ENCODE measurements at regions of chr1 and their contacts with region 1.

Region 1: DNA sequence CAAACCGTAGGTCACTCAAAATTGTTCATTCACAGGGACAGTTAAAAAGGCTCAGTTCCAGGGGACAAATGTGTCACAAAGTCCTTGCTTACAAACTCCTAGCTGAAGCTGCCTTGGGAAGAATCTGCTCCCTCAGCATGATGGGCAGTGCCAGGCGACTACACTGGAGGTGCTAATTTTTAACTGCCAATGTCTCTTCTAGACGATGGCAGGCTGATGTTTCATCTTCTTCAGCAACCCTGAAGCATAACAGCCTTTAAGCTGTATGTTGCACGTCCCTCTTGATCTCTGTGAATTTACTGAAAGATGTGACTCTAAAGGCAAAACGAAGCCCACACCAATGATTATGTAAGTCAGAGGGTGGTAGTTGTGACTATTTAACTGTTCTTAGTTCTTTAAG is 11.3 kb downstream of the COA7 start:
- DNase-seq: no peak
- H3K4me3 Mint-ChIP-seq: no peak overlapping the region
- H3K27ac Mint-ChIP-seq: no peak overlapping the region
- H3K4me1 Mint-ChIP-seq: peaks cover 9% of the 10 kb centered on the region
- H3K27me3 Mint-ChIP-seq: no peaks in the 10 kb centered on the region

Region 2: DNA sequence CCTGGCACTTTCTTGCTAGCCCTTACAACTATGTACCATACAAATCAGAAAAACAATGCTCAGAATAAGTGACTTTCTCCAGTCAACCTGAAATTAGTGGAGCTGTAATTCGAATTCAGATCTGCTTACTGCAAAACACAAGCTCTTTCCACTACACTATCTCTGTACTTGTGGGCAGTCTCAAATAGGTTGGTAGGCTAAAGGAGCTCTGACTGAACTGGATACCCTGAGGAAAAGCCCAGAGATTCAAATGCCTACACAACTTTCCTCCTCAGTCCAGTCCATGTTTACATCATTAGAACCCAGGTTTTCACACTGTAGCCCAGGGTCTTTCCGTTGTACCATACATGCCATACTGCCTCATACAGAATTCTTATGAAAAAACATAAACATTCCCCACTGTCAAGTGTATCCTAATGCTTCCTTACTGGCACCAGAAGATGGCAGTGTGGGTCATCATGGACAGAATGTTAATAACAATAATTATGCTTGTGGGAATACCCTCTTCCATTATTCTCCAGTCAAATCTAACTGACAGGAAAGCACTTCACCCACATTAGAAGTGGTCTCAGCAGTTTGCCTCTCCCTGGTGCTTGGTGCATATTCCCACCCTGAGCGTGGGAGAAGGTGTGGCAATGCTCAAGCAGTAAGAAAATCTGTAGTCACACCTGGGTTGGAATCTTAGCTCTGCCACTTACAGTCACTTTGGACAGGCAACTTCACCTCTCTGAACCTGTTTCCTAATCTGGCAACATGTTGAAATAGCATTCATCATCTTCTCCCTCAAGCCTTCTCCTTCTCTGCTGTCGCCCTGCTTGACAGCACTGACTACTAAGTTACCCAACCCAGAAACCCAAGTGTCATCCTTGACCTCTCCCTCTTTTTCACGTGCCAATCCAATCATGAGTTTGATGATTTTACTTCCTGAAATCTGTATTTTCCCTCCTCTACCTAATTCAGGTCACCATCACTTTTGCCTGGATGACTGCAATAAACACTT is 559.3 kb before region 1 on chr1:
- CTCF ChIA-PET with region 1: no interaction called
- intact Hi-C with region 1: loop called (anchors 1 kb)
- DNase-seq: peak; percentile 59
- H3K4me3 Mint-ChIP-seq: no peak overlapping the region
- H3K27ac Mint-ChIP-seq: no peak overlapping the region
- H3K4me1 Mint-ChIP-seq: peaks cover 16% of the 10 kb centered on the region
- H3K27me3 Mint-ChIP-seq: peaks cover 11% of the 10 kb centered on the region

Region 3: GRCh38 chr1:52281518-52281917 is 405.3 kb before region 1 on chr1:
- CTCF ChIA-PET with region 1: no interaction called
- intact Hi-C with region 1: no loop called
- DNase-seq: no peak
- H3K4me3 Mint-ChIP-seq: no peak overlapping the region
- H3K27ac Mint-ChIP-seq: no peak overlapping the region
- H3K4me1 Mint-ChIP-seq: no peaks in the 10 kb centered on the region
- H3K27me3 Mint-ChIP-seq: no peaks in the 10 kb centered on the region

Region 4: GRCh38 chr1:52404116-52404986 is 282.5 kb before region 1 on chr1 and contains the starts of genes ORC1 and PRPF38A:
- CTCF ChIA-PET with region 1: interaction called, 6 read pairs
- intact Hi-C with region 1: loop called (anchors 1 kb)
- DNase-seq: peak; percentile 99
- H3K4me3 Mint-ChIP-seq: peak within 1 kb of the TSS; percentile 100
- H3K27ac Mint-ChIP-seq: peak within 1 kb of the TSS; percentile 99
- H3K4me1 Mint-ChIP-seq: peaks cover 45% of the 10 kb centered on the region
- H3K27me3 Mint-ChIP-seq: no peaks in the 10 kb centered on the region
- total RNA-seq, gene ORC1: 46.9 to 49.3 TPM
- total RNA-seq, gene PRPF38A: 86.0 to 91.8 TPM

Region 5: DNA sequence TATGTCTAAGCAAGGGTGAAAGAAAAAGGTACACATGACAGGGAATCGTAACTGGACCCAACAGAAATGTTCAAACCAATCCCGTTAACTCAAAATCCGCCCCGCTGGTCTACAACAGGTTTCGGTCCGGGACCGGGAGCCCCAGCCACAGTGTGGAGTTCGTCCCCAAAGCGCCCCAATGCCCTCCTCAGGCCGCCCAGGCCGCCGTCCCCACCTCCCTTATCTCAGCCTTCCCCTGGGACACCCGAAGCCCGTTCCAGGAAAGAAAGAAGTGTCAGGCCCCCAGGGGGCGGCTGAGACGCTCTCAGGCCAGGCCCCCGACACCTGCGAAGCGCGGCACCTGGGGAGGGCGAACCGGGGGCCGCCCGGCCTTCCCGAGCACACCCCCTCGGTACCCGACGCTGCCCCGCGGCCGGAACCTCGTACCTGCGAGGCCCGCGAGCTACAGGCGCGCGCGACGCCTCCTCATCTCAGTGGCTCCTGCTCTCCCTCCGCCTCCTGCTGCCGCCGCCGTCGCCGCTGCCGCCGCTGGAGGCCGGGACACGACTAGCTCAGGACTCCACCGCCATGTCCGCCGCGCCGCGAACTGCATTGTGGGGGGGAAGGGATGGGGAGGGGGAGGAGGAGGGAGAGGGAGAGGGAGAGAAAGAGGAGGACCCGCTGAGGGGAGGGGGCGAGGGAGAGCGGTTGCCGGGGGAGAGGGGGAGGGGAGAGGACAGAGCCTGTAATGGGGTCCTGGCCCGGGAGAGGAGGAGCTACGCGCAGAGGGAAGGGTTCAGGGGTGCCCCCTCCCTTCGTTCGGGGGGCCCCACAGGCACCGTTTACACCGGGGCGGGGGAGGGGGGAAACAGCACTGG is 134.1 kb before region 1 on chr1 and contains the start of gene TUT4:
- CTCF ChIA-PET with region 1: no interaction called
- intact Hi-C with region 1: loop called (anchors 5 kb)
- DNase-seq: peak; percentile 88
- H3K4me3 Mint-ChIP-seq: peak within 1 kb of the TSS; percentile 50
- H3K27ac Mint-ChIP-seq: no peak within 1 kb of the TSS
- H3K4me1 Mint-ChIP-seq: peaks cover 31% of the 10 kb centered on the region
- H3K27me3 Mint-ChIP-seq: no peaks in the 10 kb centered on the region
- total RNA-seq, gene TUT4: 48.1 to 51.2 TPM

Region 6: DNA sequence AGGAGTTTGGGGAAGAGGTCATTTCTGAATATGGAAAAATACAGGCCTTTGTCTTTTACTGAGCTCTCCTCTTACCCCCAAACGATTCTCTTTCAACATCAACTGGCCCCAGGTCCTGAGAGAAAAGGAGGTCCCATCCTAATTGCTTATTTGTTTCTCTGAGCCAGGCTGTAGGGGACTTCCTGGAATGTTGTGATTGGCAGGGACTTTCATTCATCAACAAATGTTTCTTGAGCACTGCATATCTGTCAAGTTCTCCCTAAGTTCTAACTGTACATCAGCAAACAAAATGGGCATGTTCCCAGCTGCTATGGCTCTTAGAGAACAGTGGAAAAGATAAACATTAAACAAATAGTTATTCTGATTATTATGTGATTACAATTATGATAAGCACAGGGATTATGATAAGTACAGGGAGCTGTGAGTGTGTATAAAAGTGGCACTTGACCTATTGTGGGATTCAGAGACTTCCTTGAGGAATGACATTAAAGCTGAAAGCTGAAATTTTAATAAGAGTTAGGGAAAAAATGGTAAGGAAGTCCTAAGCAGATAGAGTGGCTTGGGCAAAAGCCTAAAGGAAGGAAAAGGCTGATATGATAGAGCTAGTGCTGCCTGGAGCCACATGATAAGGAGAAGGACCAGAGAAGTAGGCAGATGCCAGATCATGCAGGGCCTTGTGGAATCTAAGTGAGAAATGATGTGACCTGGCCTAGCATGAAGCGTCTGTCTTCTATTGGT is 73.0 kb before region 1 on chr1:
- CTCF ChIA-PET with region 1: no interaction called
- intact Hi-C with region 1: no loop called
- DNase-seq: no peak
- H3K4me3 Mint-ChIP-seq: no peak overlapping the region
- H3K27ac Mint-ChIP-seq: no peak overlapping the region
- H3K4me1 Mint-ChIP-seq: peaks cover 9% of the 10 kb centered on the region
- H3K27me3 Mint-ChIP-seq: no peaks in the 10 kb centered on the region

Region 7: GRCh38 chr1:52659851-52660596 is 26.8 kb before region 1 on chr1:
- CTCF ChIA-PET with region 1: no interaction called
- intact Hi-C with region 1: no loop called
- DNase-seq: no peak
- H3K4me3 Mint-ChIP-seq: no peak overlapping the region
- H3K27ac Mint-ChIP-seq: peak overlapping the region; percentile 83
- H3K4me1 Mint-ChIP-seq: peaks cover 20% of the 10 kb centered on the region
- H3K27me3 Mint-ChIP-seq: no peaks in the 10 kb centered on the region

Region 8: DNA sequence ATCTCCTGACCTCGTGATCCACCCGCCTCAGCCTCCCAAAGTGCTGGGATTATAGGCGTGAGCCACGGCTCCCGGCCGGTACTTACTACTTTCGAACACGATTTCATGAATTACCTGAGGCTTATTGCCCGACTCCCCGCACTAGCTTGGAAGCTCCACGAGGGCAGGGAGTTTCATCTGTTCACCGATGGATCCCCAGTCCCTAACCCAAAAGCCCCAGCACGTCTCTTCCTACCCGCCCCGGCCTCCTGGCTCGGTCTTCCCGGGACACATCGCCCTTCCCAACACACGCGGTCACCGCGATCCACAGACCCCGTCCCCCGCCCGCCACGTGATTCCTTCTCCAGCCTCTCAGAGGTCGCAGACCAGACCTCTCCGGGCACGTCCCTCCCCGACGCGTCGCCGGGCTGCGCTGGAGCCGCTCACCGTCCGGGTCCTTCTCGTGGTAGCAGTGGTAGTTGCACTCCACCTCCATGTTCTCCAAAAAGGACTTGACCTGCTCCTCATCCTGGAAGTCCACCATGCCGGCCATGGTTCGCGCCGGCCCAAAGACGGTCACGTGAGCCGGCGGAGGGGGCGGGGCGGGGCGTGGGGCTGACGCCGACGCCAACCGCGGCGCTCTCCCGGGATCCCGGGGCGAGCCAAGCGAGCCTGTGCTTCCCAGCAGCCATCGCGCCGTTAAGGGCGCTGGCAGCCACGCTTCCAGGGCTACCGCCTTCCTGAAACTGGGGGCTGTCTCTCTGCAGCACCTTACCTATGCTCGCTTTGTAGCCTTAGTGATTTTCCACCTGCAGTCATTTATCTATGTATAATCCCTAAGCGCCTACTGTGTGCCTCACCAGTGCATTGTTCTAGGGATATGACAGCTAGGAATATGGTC is 11.2 kb after region 1 on chr1 and contains the start of gene COA7:
- CTCF ChIA-PET with region 1: interaction called, 18 read pairs
- intact Hi-C with region 1: no loop called
- DNase-seq: peak; percentile 79
- H3K4me3 Mint-ChIP-seq: peak within 1 kb of the TSS; percentile 93
- H3K27ac Mint-ChIP-seq: peak within 1 kb of the TSS; percentile 78
- H3K4me1 Mint-ChIP-seq: peaks cover 28% of the 10 kb centered on the region
- H3K27me3 Mint-ChIP-seq: no peaks in the 10 kb centered on the region
- total RNA-seq, gene COA7: 11.4 to 11.7 TPM

Region 9: DNA sequence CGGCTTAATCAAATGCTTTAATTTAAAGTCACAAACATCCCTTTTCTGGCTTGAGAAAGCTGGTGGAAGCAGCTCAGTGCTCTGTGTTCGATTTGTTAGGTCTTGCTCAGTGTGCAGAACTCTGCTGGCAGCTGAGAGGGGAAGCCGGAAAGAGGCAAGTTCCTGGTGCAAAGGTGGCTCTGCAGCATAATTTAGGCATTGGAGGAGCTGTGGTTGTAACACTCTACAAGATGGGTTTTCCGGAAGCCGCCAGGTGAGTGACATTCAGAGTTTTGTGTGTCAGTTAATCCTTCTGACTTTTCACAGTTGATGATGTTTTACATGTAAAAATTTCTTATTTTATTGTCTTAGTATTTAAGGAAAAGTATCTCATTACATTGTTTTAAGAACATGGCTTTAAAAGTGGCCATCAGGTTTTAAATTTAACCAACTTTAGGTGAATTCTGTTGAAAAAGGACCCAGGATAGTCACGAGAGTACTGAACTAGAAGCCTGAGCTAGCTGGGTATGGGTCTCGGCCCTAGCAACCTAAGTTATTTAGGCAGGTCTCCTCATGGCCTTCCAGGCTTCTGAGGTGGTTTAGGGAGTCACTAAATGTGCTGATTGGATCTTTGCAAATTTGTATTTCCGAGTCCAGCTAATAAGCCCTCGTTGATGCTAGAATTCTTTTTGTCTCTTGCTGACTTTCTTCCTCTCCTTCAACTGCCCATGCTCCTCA is 328.1 kb after region 1 on chr1:
- CTCF ChIA-PET with region 1: no interaction called
- intact Hi-C with region 1: no loop called
- DNase-seq: peak; percentile 91
- H3K4me3 Mint-ChIP-seq: peak overlapping the region; percentile 78
- H3K27ac Mint-ChIP-seq: peak overlapping the region; percentile 60
- H3K4me1 Mint-ChIP-seq: peaks cover 20% of the 10 kb centered on the region
- H3K27me3 Mint-ChIP-seq: no peaks in the 10 kb centered on the region

Measured in activated naive CD4-positive, alpha-beta T cell treated with anti-CD3 and anti-CD28 coated beads for 36 hours (primary cell).